GM12878 (cell line): ENCODE measurements at regions of chr6 and their contacts with region 1.

Region 1: DNA sequence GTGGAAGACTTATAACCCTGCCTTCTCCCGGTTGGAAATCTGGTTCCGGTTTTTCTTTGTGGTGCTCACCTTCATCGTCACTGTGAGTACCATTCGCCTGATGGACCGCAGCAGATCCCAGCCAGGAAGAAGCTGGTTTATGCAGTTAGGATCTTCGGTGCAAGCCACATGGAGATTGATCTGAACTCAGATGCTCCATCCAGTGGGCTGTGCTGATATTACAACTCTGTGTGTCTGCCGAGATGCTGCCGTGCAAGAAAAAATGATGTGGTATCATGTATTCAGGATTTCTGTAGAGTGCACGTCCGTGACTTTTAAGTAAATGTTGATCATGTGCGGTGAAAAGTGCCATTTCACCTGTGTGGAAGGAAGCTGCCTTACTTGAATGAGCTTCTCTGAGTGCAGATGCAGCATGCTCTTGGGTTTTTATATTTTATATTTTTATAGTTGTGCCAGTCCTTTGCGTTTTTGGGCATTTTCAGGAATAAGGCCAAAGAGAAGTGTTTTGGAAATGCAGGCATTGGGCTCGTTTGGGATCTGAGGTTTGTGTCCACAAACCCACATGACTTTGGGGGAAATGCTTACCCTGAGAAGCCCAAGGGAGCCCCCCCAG is 39.2 kb downstream of the DYNLT1 start:
- DNase-seq: peak; percentile 36
- ATAC-seq: peak; percentile 90
- H3K4me3 ChIP-seq: no peak overlapping the region
- H3K27ac ChIP-seq: no peak overlapping the region
- H3K4me1 ChIP-seq: no peaks in the 10 kb centered on the region
- H3K27me3 ChIP-seq: no peaks in the 10 kb centered on the region
- CTCF ChIP-seq: peak; percentile 68 to 84 (median 74); a peak in 5 of 6 replicates
- EP300 ChIP-seq: no peak
- POLR2A ChIP-seq: no peak
- RAD21 ChIP-seq: peak; percentile 72

Region 2: GRCh38 chr6:158509465-158509864 is 95.9 kb before region 1 on chr6:
- CTCF ChIA-PET with region 1: interaction called, 10 read pairs
- POLR2A ChIA-PET with region 1: no interaction called
- RAD21 ChIA-PET with region 1: no interaction called
- SMC1A ChIA-PET with region 1: interaction called, 5 read pairs
- in situ Hi-C with region 1: no loop called
- intact Hi-C with region 1: no loop called
- DNase-seq: no peak
- ATAC-seq: no peak
- H3K4me3 ChIP-seq: no peak overlapping the region
- H3K27ac ChIP-seq: no peak overlapping the region
- H3K4me1 ChIP-seq: no peaks in the 10 kb centered on the region
- H3K27me3 ChIP-seq: no peaks in the 10 kb centered on the region
- CTCF ChIP-seq: no peak
- EP300 ChIP-seq: no peak
- POLR2A ChIP-seq: no peak
- RAD21 ChIP-seq: no peak

Region 3: GRCh38 chr6:158575550-158575949 is 29.8 kb before region 1 on chr6:
- CTCF ChIA-PET with region 1: no interaction called
- POLR2A ChIA-PET with region 1: no interaction called
- RAD21 ChIA-PET with region 1: no interaction called
- SMC1A ChIA-PET with region 1: no interaction called
- in situ Hi-C with region 1: no loop called
- intact Hi-C with region 1: no loop called
- DNase-seq: no peak
- ATAC-seq: no peak
- H3K4me3 ChIP-seq: no peak overlapping the region
- H3K27ac ChIP-seq: no peak overlapping the region
- H3K4me1 ChIP-seq: no peaks in the 10 kb centered on the region
- H3K27me3 ChIP-seq: no peaks in the 10 kb centered on the region
- CTCF ChIP-seq: no peak
- EP300 ChIP-seq: no peak
- POLR2A ChIP-seq: no peak
- RAD21 ChIP-seq: no peak